CD14-positive monocyte (primary cell): ENCODE measurements at regions of chr21 and their contacts with region 1.

Region 1: GRCh38 chr21:42534421-42535378 is 21.0 kb downstream of the SLC37A1 start:
- DNase-seq: peak; percentile 47 to 66 (median 56)
- H3K4me3 ChIP-seq: peak overlapping the region in 1 of 3 experiments; percentile 59
- H3K4me3 Mint-ChIP-seq: peak overlapping the region; percentile 72 to 92
- H3K27ac ChIP-seq: peak overlapping the region in 1 of 2 donors; percentile 45
- H3K27ac Mint-ChIP-seq: peak overlapping the region; percentile 22 to 85 (median 66)
- H3K4me1 ChIP-seq: peaks cover 25 to 31% of the 10 kb centered on the region in 2 donors
- H3K4me1 Mint-ChIP-seq: peaks cover 32% of the 10 kb centered on the region
- H3K27me3 ChIP-seq: no peaks in the 10 kb centered on the region
- H3K27me3 Mint-ChIP-seq: peaks cover 0 to 3% (median 0%) of the 10 kb centered on the region in 3 donors
- CTCF ChIP-seq: no peak

Region 2: DNA sequence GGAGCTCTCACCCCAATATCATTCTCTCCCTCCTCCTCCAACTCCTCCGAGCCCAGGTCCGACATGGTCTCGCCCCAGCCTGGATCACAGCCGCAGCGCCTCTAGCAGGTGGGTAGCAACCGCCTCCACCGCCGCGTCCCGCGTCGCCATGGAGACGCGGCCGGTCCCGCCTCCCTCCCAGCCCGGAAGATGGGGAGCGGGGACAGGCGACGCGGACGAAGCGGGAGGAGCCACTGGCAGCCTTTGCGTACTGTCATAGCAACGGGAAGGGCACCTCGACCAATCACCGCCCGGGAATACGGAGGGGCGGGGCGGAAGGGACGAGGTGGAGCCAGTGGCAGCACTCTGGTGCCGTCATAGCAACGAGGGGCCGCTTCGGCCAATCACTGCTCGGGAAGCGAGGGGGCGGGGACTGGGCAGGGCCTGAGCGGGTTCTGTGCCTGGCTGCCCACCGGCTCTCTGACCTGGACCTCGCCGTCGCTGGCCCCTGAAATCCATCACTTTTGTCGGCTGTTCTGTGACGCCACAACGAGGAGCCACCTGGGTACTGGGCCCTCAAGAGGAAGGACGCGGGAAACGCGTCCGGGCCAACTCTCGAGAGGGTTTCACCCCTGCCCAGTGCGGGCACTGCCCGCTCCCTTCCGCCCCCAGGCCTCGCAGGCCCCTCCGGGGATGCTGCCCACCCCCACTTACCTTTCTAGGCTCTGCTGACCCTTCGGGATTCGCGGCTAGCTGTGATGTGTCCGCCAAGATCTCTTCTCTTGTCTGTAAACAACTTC is 38.4 kb before region 1 on chr21 and contains the start of gene RSPH1:
- intact Hi-C with region 1: loop called in 1 of 2 experiments (anchors 5 kb)
- DNase-seq: peak; percentile 99
- H3K4me3 ChIP-seq: peak within 1 kb of the TSS; percentile 50 to 83 (median 74)
- H3K4me3 Mint-ChIP-seq: peak within 1 kb of the TSS; percentile 89 to 99
- H3K27ac ChIP-seq: peak within 1 kb of the TSS; percentile 20 to 79
- H3K27ac Mint-ChIP-seq: peak within 1 kb of the TSS; percentile 84 to 94 (median 90)
- H3K4me1 ChIP-seq: peaks cover 13 to 17% of the 10 kb centered on the region in 2 donors
- H3K4me1 Mint-ChIP-seq: peaks cover 18% of the 10 kb centered on the region
- H3K27me3 ChIP-seq: peaks cover 0 to 3% of the 10 kb centered on the region in 2 donors
- H3K27me3 Mint-ChIP-seq: peaks cover 2 to 5% (median 5%) of the 10 kb centered on the region in 3 donors
- CTCF ChIP-seq: no peak
- polyA plus RNA-seq, gene RSPH1: 0.03 TPM in 1 of 3 donors, not detected in the others

Region 3: GRCh38 chr21:42845296-42845965 is 310.7 kb after region 1 on chr21:
- intact Hi-C with region 1: no loop called
- DNase-seq: no peak
- H3K4me3 ChIP-seq: no peak overlapping the region
- H3K4me3 Mint-ChIP-seq: no peak overlapping the region
- H3K27ac ChIP-seq: no peak overlapping the region
- H3K27ac Mint-ChIP-seq: peak overlapping the region in 1 of 7 donors; percentile 20
- H3K4me1 ChIP-seq: no peaks in the 10 kb centered on the region
- H3K4me1 Mint-ChIP-seq: no peaks in the 10 kb centered on the region
- H3K27me3 ChIP-seq: no peaks in the 10 kb centered on the region
- H3K27me3 Mint-ChIP-seq: peaks cover 0 to 3% (median 0%) of the 10 kb centered on the region in 3 donors
- CTCF ChIP-seq: no peak